ENCODE measurements at regions of chr2 and their contacts with region 1.

Region 1: GRCh38 chr2:147045113-147045512 is 799.7 kb upstream of the ACVR2A start:
- DNase-seq: peak in 2 of 4 experiments; percentile 8 to 10
- ATAC-seq: no peak
- H3K4me3 ChIP-seq: no peak overlapping the region
- H3K27ac ChIP-seq: no peak overlapping the region
- H3K4me1 ChIP-seq: no peaks in the 10 kb centered on the region
- H3K27me3 ChIP-seq: no peaks in the 10 kb centered on the region
- CTCF ChIP-seq: peak in 2 of 3 experiments; percentile 31 to 38; a peak in 3 of 6 replicates
- EP300 ChIP-seq: no peak
- POLR2A ChIP-seq: no peak
- RAD21 ChIP-seq: peak in 1 of 2 experiments; percentile 34; a peak in 2 of 4 replicates

Region 2: DNA sequence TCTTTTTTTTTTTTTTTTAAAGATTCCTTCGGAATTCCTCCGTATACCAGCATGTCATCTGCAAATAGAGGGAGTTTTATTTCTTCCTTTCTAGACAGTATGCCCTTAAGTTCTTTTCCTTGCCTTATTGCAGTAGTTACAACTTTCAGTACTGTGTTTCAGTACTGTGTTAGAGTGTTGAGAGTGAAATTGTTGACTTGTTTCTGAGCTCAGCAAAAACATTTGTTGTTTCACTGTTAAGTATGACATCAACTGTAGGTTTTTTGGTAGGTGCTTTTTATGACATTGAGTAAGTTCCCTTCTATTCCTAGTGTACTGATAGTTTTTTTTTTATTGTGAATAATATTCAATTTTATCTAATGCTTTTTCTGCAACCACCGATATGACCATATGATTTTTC is 843.6 kb after region 1 on chr2:
- CTCF ChIA-PET with region 1: no interaction called
- POLR2A ChIA-PET with region 1: no interaction called
- in situ Hi-C with region 1: loop called (anchors 25 kb)
- intact Hi-C with region 1: no loop called
- DNase-seq: no peak
- ATAC-seq: no peak
- H3K4me3 ChIP-seq: no peak overlapping the region
- H3K27ac ChIP-seq: no peak overlapping the region
- H3K4me1 ChIP-seq: no peaks in the 10 kb centered on the region
- H3K27me3 ChIP-seq: no peaks in the 10 kb centered on the region; a peak in 1 of 5 replicates
- CTCF ChIP-seq: no peak
- EP300 ChIP-seq: no peak
- POLR2A ChIP-seq: no peak
- RAD21 ChIP-seq: no peak